Activated CD8-positive, alpha-beta T cell treated with anti-CD3 and anti-CD28 coated beads for 36 hours (primary cell): ENCODE measurements at regions of chr11 and their contacts with region 1.

Region 1: GRCh38 chr11:75445315-75445953 is 12.4 kb upstream of the KLHL35 start:
- DNase-seq: peak; percentile 85
- ATAC-seq: peak; percentile 95
- H3K4me3 Mint-ChIP-seq: no peak overlapping the region
- H3K27ac Mint-ChIP-seq: no peak overlapping the region
- H3K4me1 Mint-ChIP-seq: no peaks in the 10 kb centered on the region
- H3K27me3 Mint-ChIP-seq: no peaks in the 10 kb centered on the region
- CTCF ChIP-seq: peak; percentile 95

Region 2: GRCh38 chr11:74988541-74989260 is 456.7 kb before region 1 on chr11 and contains the start of gene NEU3:
- CTCF ChIA-PET with region 1: no interaction called
- POLR2A ChIA-PET with region 1: no interaction called
- intact Hi-C with region 1: no loop called
- DNase-seq: peak; percentile 89
- ATAC-seq: peak; percentile 95
- H3K4me3 Mint-ChIP-seq: peak within 1 kb of the TSS; percentile 94
- H3K27ac Mint-ChIP-seq: peak within 1 kb of the TSS; percentile 83
- H3K4me1 Mint-ChIP-seq: peaks cover 27% of the 10 kb centered on the region
- H3K27me3 Mint-ChIP-seq: no peaks in the 10 kb centered on the region
- CTCF ChIP-seq: no peak
- total RNA-seq, gene NEU3: 18.6 to 19.4 TPM

Region 3: DNA sequence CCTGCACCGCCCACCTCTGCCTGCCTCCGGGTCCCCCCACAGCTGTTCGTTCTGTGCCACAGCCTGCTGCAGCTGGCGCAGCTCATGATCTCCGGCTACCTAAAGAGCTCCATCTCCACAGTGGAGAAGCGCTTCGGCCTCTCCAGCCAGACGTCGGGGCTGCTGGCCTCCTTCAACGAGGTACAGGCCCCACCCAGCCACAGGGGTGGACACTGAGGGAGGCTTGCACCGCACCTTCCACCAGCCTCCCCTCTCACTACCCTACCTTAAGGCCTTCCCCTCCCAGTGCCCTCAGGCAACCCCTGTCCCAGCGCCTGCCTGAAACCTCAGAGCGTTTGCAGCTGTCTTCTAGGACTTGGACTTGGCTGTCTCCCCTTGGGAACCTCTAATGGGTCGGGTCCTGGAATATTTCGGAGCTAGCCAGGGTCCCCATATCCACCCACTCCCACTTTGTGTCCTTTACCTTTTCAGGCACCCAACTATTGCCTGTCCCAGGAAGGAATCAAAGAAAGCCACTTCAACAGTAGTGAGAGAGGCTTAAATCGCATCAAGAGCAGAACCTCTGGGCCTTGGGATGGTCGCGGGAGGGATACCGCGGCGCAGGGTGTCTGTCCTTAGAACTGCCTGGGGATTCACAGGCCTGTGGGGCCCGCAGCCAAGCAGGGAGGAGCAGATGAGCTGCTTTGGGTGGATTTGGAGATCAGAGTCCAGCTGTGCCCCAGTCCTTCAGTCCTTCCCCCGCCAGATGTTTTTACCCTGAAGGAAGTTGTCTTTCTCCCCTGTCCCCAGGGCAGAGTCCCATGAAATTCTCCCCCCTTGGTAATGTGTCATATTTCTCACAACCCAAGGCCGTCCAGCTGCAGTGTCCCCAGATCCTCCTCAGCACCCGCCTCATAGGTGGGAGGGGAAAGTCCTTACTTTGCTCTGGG is 281.2 kb before region 1 on chr11:
- CTCF ChIA-PET with region 1: no interaction called
- POLR2A ChIA-PET with region 1: no interaction called
- intact Hi-C with region 1: no loop called
- DNase-seq: no peak
- ATAC-seq: no peak
- H3K4me3 Mint-ChIP-seq: no peak overlapping the region
- H3K27ac Mint-ChIP-seq: no peak overlapping the region
- H3K4me1 Mint-ChIP-seq: no peaks in the 10 kb centered on the region
- H3K27me3 Mint-ChIP-seq: no peaks in the 10 kb centered on the region
- CTCF ChIP-seq: no peak

Region 4: GRCh38 chr11:75428281-75428724 is 17.1 kb before region 1 on chr11:
- CTCF ChIA-PET with region 1: interaction called, 16 read pairs
- POLR2A ChIA-PET with region 1: interaction called, 6 read pairs
- intact Hi-C with region 1: no loop called
- DNase-seq: peak; percentile 68
- ATAC-seq: peak; percentile 48
- H3K4me3 Mint-ChIP-seq: peak overlapping the region; percentile 21
- H3K27ac Mint-ChIP-seq: no peak overlapping the region
- H3K4me1 Mint-ChIP-seq: peaks cover 13% of the 10 kb centered on the region
- H3K27me3 Mint-ChIP-seq: peaks cover 38% of the 10 kb centered on the region
- CTCF ChIP-seq: no peak

Region 5: GRCh38 chr11:75525596-75526541 is 80.4 kb after region 1 on chr11 and contains the start of gene GDPD5:
- CTCF ChIA-PET with region 1: interaction called, 130 read pairs
- POLR2A ChIA-PET with region 1: interaction called, 5 read pairs
- intact Hi-C with region 1: no loop called
- DNase-seq: peak; percentile 87
- ATAC-seq: peak; percentile 97
- H3K4me3 Mint-ChIP-seq: peak within 1 kb of the TSS; percentile 74
- H3K27ac Mint-ChIP-seq: peak within 1 kb of the TSS; percentile 14
- H3K4me1 Mint-ChIP-seq: peaks cover 20% of the 10 kb centered on the region
- H3K27me3 Mint-ChIP-seq: peaks cover 5% of the 10 kb centered on the region
- CTCF ChIP-seq: peak; percentile 28
- total RNA-seq, gene GDPD5: 7.8 to 11.0 TPM

Region 6: DNA sequence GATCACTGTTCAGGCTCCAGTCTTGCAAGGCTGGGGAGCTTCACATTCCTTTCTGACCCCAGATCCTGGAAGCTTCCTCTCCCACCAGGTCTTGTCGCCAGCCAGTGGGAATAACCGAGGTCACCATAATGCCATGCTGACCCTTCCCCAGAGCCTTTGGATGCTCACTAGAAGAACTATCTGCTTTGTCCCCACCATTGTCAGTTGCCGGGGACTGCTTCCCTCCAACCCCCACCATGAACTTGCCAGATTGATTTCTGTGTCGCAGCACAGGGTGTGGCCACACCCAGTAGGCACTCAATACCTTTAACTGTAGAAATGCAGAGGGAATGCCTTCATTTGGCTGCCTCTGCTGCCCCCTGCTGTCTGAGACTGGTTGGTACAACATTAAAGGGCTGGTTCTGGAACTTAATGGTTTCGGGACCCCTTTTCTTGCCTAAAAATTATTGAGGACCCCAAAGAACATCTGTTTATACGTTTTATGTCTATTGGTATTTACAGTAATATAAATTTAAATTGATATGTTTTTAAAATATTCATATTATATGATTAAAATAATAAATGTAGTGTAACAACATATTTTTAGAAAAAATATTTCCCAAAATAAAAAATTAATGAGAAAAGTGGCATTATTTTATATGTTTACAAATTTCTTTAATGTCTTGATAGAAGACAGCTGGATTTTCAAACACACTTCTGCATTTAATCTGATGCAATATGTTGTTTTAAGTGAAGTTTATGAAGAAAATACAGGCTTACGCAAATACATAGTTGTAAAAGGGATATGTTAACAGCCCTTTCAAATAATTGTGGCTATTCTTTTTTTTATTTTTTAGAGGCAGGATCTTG is 87.0 kb after region 1 on chr11:
- CTCF ChIA-PET with region 1: interaction called, 130 read pairs
- POLR2A ChIA-PET with region 1: interaction called, 5 read pairs
- intact Hi-C with region 1: loop called (anchors 1 kb)
- DNase-seq: peak; percentile 89
- ATAC-seq: peak; percentile 81
- H3K4me3 Mint-ChIP-seq: no peak overlapping the region
- H3K27ac Mint-ChIP-seq: no peak overlapping the region
- H3K4me1 Mint-ChIP-seq: peaks cover 31% of the 10 kb centered on the region
- H3K27me3 Mint-ChIP-seq: no peaks in the 10 kb centered on the region
- CTCF ChIP-seq: peak; percentile 95

Region 7: DNA sequence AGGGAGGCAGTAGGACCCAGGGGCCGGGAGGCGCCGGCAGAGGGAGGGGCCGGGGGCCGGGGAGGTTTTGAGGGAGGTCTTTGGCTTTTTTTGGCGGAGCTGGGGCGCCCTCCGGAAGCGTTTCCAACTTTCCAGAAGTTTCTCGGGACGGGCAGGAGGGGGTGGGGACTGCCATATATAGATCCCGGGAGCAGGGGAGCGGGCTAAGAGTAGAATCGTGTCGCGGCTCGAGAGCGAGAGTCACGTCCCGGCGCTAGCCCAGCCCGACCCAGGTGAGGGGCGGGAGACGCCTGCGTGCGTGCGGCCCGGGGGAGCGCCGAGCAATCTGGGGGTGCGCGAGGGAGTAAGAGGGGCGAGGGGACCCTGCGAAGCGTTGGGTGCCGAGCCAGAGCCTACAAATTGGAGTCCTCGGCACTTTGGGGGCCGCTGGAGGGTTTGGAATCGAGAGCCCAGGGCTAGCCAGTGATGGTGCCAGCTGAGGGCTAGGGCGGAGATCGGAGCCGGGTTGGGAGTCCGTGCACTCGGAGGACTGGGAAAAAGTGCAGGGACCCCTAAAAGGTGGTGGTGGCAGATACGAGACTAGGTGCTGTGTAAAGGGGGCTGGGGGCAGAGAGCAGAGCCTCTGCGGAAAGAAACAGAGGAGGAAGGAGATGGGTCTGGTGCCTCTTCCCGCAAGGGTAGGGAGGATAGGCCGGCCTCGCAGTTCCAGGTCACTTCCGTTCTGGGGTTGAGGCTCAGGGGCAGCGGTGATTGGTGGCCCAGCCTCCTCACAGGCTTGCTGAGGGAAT is 116.8 kb after region 1 on chr11 and contains the start of gene SERPINH1:
- CTCF ChIA-PET with region 1: interaction called, 10 read pairs
- POLR2A ChIA-PET with region 1: no interaction called
- intact Hi-C with region 1: no loop called
- DNase-seq: peak; percentile 85
- ATAC-seq: peak; percentile 89
- H3K4me3 Mint-ChIP-seq: peak within 1 kb of the TSS; percentile 100
- H3K27ac Mint-ChIP-seq: peak within 1 kb of the TSS; percentile 99
- H3K4me1 Mint-ChIP-seq: peaks cover 32% of the 10 kb centered on the region
- H3K27me3 Mint-ChIP-seq: no peaks in the 10 kb centered on the region
- CTCF ChIP-seq: no peak
- total RNA-seq, gene SERPINH1: 15.7 to 17.7 TPM

Region 8: GRCh38 chr11:75582895-75583717 is 137.7 kb after region 1 on chr11:
- CTCF ChIA-PET with region 1: no interaction called
- POLR2A ChIA-PET with region 1: no interaction called
- intact Hi-C with region 1: no loop called
- DNase-seq: peak; percentile 79
- ATAC-seq: peak; percentile 95
- H3K4me3 Mint-ChIP-seq: peak overlapping the region; percentile 79
- H3K27ac Mint-ChIP-seq: peak overlapping the region; percentile 87
- H3K4me1 Mint-ChIP-seq: peaks cover 15% of the 10 kb centered on the region
- H3K27me3 Mint-ChIP-seq: no peaks in the 10 kb centered on the region
- CTCF ChIP-seq: no peak